Head of caudate nucleus (tissue), 42 donors: ENCODE measurements at regions of chr6 and their contacts with region 1.

Region 1: GRCh38 chr6:163956571-163957407 is 542.3 kb downstream of the QKI start:
- DNase-seq: peak in 41 of 42 donors; percentile 50 to 93 (median 79)

Region 2: DNA sequence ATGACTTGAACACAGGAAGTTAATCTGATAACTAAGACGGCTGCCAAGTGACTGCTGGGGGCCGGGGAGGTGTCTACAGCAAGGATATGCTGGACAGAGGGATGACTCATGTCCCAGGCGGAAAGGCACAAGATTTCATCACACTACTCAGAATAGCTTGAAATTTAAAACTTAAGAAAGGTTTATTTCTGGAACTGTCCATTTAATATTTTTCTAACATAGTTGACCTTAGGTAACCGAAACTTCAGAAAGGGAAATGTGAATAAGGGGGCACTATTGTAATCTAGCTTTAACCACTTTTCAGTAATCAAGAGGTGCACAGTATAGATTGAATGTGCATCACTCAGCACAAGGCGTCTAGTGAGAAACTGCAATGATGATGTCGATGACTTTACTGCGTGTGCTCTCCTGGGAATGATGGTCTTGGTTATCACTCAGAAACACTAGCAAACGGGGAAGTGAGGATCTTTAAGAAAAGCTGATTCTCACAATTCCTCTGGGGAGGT is 370.8 kb before region 1 on chr6:
- intact Hi-C with region 1: loop called (anchors 10 kb)
- DNase-seq: peak in 4 of 42 donors; percentile 15 to 66 (median 31)